Natural killer cell (primary cell): ENCODE measurements at regions of chr7 and their contacts with region 1.

Region 1: DNA sequence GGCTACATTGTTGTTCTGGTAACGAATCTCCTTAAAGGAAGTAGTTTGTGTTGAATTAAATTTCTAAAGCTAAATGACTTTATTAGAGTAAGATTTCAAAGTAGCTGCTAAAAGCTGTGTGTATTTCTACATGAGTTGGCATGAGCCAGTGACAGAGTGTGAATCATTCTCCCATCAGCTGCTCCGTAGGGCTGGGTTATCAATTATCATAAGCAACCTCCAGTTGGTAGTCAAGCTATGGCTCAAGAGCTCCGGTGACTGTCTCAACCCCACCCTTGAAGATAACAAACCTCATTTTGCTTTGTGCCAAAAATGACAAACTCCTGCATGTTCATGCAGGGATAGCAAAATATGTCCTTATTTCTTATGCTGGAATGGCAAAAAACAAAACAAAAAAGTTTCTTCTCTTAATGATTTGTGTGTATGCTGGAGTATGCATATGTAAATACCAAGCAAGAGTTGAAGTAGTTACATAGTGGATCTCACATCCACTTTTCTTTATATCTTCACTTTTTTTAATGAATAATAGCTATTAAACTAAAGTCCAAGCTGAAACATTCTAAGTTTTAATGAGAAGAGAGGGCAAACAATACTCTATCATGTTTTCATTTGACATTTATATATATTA is 249.4 kb downstream of the CACNA2D1 start:
- DNase-seq: no peak
- ATAC-seq: no peak
- H3K4me3 ChIP-seq: no peak overlapping the region
- H3K4me3 Mint-ChIP-seq: no peak overlapping the region
- H3K27ac ChIP-seq: no peak overlapping the region
- H3K27ac Mint-ChIP-seq: no peak overlapping the region
- H3K4me1 ChIP-seq: no peaks in the 10 kb centered on the region
- H3K4me1 Mint-ChIP-seq: no peaks in the 10 kb centered on the region
- H3K27me3 ChIP-seq: no peaks in the 10 kb centered on the region
- H3K27me3 Mint-ChIP-seq: no peaks in the 10 kb centered on the region
- CTCF ChIP-seq: no peak

Region 2: DNA sequence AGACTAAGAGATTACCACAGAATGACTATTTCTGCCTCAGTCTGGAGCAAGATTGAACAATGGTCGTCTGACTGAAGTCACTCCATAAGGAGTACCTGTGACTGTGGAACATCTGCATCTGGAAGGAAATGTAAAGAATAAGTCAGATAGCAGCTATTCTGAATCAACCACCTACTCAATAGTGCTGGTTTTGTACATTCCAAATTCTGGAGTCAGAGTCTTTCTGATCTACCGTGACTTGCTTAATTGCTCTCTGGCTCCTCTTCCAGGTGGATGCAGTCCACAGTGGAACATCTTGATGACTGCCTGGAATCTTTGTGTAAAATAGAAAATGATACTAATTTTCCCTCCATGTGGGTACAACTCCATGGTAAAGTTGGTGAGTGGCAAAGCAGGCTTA is 1119.0 kb before region 1 on chr7:
- intact Hi-C with region 1: loop called (anchors 5 kb)
- DNase-seq: no peak
- ATAC-seq: no peak
- H3K4me3 ChIP-seq: no peak overlapping the region
- H3K4me3 Mint-ChIP-seq: no peak overlapping the region
- H3K27ac ChIP-seq: no peak overlapping the region
- H3K27ac Mint-ChIP-seq: no peak overlapping the region
- H3K4me1 ChIP-seq: no peaks in the 10 kb centered on the region
- H3K4me1 Mint-ChIP-seq: no peaks in the 10 kb centered on the region
- H3K27me3 ChIP-seq: no peaks in the 10 kb centered on the region
- H3K27me3 Mint-ChIP-seq: no peaks in the 10 kb centered on the region
- CTCF ChIP-seq: no peak